ENCODE measurements at regions of chr9 and their contacts with region 1.

Region 1: DNA sequence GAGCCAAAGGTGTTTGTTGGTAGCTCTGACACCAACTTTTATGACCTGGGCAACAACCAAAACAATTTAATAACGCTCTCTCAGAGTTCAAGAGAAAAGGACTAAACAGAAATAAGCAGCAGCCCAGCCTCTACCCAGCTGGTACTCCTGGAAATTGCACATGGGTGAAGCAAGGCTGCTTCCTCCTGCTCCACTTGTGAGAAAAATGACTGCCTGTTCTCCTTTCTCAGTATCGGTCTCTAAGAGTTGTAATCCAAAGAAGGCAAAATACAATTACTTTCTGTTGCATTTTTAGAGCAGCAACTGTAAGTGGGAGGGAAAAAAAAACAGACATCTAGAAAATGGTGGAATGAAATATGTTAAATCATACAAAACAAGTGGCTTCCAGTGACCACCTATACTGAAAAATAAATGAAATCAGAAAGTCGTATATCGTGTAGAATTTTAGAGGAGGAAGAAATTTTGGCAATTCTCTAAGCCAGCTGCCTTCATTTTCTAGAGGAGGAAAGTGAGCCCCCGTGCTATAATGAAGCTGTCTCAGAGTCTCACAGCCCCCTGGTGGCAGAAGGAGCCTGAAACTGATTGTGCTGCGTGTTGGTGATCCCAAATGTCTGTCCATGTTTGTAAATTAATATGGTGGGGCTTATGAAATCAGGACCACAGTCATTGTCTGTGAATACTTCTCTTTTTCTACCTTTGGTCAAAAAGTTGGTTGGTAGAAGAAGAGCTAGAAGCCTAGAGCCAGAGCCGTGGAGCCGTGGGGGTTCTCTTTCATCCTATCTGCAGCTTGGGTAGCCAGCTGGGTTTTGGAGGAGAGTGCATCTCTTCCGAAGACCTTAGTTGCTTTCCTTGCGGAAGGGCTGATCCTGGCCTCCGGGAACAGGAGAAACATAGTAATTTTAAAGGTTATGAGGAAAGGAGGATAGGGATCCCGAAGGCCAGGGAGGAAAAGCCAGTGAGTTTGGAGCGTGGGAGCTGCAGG is 139.9 kb downstream of the PIP5K1B start:
- DNase-seq: peak in 1 of 2 donors; percentile 77
- H3K4me3 ChIP-seq: no peak overlapping the region
- H3K27ac ChIP-seq: no peak overlapping the region
- H3K4me1 ChIP-seq: peaks cover 0 to 16% of the 10 kb centered on the region in 2 donors
- H3K27me3 ChIP-seq: no peaks in the 10 kb centered on the region
- CTCF ChIP-seq: peak; percentile 34 to 60 (median 52)

Region 2: GRCh38 chr9:68704814-68705530 is 139.9 kb before region 1 on chr9 and contains the start of gene PIP5K1B:
- intact Hi-C with region 1: loop called (anchors 2 kb)
- DNase-seq: peak in 1 of 2 donors; percentile 72
- H3K4me3 ChIP-seq: peak within 1 kb of the TSS; percentile 78 to 88
- H3K27ac ChIP-seq: peak within 1 kb of the TSS; percentile 30 to 81
- H3K4me1 ChIP-seq: no peaks in the 10 kb centered on the region
- H3K27me3 ChIP-seq: no peaks in the 10 kb centered on the region
- CTCF ChIP-seq: peak in 1 of 3 experiments; percentile 21
- total RNA-seq, gene PIP5K1B: 0.85 TPM

Region 3: GRCh38 chr9:68804911-68805889 is 39.7 kb before region 1 on chr9:
- intact Hi-C with region 1: loop called (anchors 5 kb)
- DNase-seq: no peak
- H3K4me3 ChIP-seq: no peak overlapping the region
- H3K27ac ChIP-seq: peak overlapping the region in 1 of 2 donors; percentile 68
- H3K4me1 ChIP-seq: peaks cover 2 to 12% of the 10 kb centered on the region in 2 donors
- H3K27me3 ChIP-seq: no peaks in the 10 kb centered on the region
- CTCF ChIP-seq: no peak

Region 4: DNA sequence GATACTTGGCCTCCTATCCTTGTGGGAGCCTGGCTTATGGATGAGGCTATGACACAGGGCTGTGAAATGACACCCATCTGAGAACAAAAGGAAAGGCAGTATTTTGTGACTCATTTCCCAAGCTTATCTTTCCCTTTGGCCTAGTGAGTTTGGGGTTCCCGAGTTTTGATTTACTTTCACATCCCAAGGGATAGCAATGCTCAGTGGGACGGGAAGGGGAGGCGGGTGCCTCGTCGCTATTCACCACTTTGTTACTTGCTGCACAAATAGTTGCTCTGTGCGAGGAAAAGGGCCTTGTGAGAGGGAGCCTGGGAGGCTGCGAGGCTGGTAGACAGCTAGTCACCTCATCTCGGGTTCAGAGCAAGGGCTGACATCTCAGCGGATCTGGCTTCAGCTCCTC is 421.0 kb after region 1 on chr9:
- intact Hi-C with region 1: no loop called
- DNase-seq: no peak
- H3K4me3 ChIP-seq: no peak overlapping the region
- H3K27ac ChIP-seq: no peak overlapping the region
- H3K4me1 ChIP-seq: no peaks in the 10 kb centered on the region
- H3K27me3 ChIP-seq: no peaks in the 10 kb centered on the region
- CTCF ChIP-seq: no peak